ENCODE measurements at regions of chr17 and their contacts with region 1.

Region 1: GRCh38 chr17:18314731-18315561 is at the starts of genes SMCR8 and TOP3A:
- DNase-seq: peak; percentile 98
- ATAC-seq: peak; percentile 98 to 99
- total RNA-seq, gene SMCR8: 11.8 to 12.0 TPM
- total RNA-seq, gene TOP3A: 12.3 to 18.1 TPM

Region 2: GRCh38 chr17:18087610-18088491 is 227.1 kb before region 1 on chr17 and contains the start of gene DRG2:
- intact Hi-C with region 1: no loop called
- DNase-seq: peak; percentile 93
- ATAC-seq: peak; percentile 97 to 98
- total RNA-seq, gene DRG2: 17.8 to 22.2 TPM

Region 3: GRCh38 chr17:18225121-18225566 is 89.8 kb before region 1 on chr17:
- intact Hi-C with region 1: loop called in 1 of 2 experiments (anchors 10 kb)
- DNase-seq: peak; percentile 98
- ATAC-seq: peak; percentile 97 to 98

Region 4: GRCh38 chr17:18257982-18258355 is 57.0 kb before region 1 on chr17:
- intact Hi-C with region 1: loop called in 1 of 2 experiments (anchors 5 kb)
- DNase-seq: peak; percentile 87
- ATAC-seq: peak; percentile 68 to 82

Region 5: DNA sequence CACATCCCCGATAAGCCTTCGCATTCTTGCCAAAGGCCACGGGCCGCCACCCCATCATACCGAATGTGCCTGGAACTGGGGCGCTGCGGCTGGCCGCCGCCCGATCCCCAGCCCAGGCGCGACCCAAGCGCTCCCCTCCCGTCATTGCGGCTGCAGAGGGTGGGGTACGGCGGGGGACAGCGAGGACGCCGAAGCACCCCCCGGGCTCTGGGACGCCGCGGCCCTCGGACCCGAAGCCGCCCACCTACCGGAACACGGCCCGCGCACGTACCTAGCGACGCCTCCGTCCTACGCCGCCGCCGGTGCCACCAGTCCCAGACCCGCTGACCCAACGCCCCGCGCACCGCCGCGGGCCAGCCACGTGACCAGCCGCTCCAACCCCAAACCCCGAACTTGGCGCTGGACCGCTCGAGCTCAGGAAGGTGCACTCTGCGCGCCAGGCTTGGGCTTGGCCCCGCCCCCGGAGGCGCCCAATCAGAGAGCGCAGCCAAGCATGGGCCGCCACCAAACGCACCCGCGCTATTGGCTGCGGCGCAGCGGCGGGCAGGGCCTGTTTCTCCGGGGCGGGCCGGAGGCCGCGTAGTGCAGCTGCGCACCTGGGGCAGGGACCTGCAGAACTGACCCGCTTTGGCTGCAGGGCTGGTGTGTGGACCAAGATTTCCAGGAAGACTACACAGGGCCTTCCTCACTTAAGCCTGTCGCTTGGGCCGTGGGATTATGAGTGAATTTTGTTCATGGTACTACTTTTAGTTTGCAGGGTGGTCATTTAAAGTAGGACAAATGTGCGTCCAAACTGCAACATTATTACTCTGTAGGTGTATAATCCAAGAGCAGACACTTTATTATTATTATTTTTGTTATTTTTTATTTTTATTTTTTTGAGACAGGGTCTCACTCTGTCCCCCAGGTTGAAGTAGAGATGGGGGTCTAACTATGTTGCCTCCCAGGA is 48.4 kb after region 1 on chr17 and contains the start of gene SHMT1:
- intact Hi-C with region 1: no loop called
- DNase-seq: peak; percentile 95
- ATAC-seq: peak; percentile 99 to 100
- total RNA-seq, gene SHMT1: 13.8 to 34.3 TPM

Measured in left cardiac atrium (tissue), 4 donors.